ENCODE measurements at regions of chr16 and their contacts with region 1.

Region 1: GRCh38 chr16:4694664-4695451 is 1.5 kb downstream of the NUDT16L1 start:
- DNase-seq: peak; percentile 37 to 57 (median 51)
- ATAC-seq: no peak
- H3K4me3 ChIP-seq: peak overlapping the region in 1 of 3 donors; percentile 99
- H3K27ac ChIP-seq: no peak overlapping the region
- H3K4me1 ChIP-seq: peaks cover 0 to 22% (median 7%) of the 10 kb centered on the region in 4 donors
- H3K27me3 ChIP-seq: no peaks in the 10 kb centered on the region
- CTCF ChIP-seq: no peak
- POLR2A ChIP-seq: no peak

Region 2: DNA sequence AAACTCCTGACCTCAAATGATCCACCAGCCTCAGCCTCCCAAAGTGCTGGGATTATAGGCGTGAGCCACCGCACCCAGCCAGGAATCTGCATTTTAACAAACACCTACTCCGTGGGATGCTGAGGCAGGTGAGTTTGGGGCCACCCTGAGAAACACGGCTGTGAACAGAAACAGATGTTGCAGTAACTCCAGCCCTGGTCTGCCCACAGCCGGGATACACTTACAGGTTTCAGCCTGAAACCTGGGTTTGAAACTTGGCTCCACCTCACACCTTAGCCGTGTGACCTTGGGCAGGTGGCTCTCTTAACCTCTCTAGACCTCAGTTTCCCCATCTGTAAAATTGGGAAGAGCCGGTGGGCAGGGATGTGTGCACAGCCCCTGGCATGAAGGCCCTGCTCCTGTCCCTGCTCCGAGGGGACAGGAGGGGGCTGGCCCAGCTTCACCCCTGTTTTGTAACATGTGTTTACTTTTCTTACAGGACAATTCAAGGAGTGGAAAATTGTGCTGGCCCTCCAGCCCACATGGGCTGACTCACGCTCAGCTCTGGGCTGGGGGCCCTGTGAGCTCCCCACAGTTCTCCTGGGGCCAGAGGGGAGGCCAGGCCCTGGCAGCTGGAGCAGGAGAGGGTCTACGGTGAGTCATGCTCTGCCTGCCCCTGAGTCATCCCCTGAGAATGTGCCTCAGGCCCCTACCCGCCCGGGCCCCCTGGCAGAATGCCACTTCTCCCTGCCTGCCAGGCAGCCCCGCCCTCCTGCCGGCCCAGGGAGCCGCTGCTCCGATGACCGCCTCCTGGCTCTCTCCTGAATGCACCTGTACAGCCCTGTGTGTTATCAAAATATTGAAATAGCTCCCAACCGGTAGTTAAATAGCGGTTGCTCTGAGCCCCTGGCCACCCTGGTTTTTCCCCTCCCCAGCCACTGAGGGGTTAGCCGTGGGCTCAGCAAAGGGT is 249.7 kb after region 1 on chr16:
- intact Hi-C with region 1: loop called in 1 of 2 experiments (anchors 5 kb)
- DNase-seq: peak; percentile 66 to 90 (median 73)
- ATAC-seq: peak; percentile 84 to 91 (median 90)
- H3K4me3 ChIP-seq: no peak overlapping the region
- H3K27ac ChIP-seq: no peak overlapping the region
- H3K4me1 ChIP-seq: peaks cover 0 to 13% (median 0%) of the 10 kb centered on the region in 4 donors
- H3K27me3 ChIP-seq: no peaks in the 10 kb centered on the region
- CTCF ChIP-seq: no peak
- POLR2A ChIP-seq: no peak